ENCODE measurements at regions of chr12 and their contacts with region 1.

Region 1: GRCh38 chr12:10331642-10332239 is 24.1 kb downstream of the KLRD1 start:
- DNase-seq: no peak
- H3K4me3 ChIP-seq: no peak overlapping the region
- H3K27ac ChIP-seq: no peak overlapping the region
- H3K4me1 ChIP-seq: no peaks in the 10 kb centered on the region
- H3K27me3 ChIP-seq: no peaks in the 10 kb centered on the region
- CTCF ChIP-seq: peak; percentile 51 to 72 (median 70)
- POLR2A ChIP-seq: no peak

Region 2: GRCh38 chr12:10310926-10311720 is 20.6 kb before region 1 on chr12:
- intact Hi-C with region 1: no loop called
- DNase-seq: no peak
- H3K4me3 ChIP-seq: no peak overlapping the region
- H3K27ac ChIP-seq: no peak overlapping the region
- H3K4me1 ChIP-seq: no peaks in the 10 kb centered on the region
- H3K27me3 ChIP-seq: no peaks in the 10 kb centered on the region
- CTCF ChIP-seq: no peak
- POLR2A ChIP-seq: no peak

Region 3: DNA sequence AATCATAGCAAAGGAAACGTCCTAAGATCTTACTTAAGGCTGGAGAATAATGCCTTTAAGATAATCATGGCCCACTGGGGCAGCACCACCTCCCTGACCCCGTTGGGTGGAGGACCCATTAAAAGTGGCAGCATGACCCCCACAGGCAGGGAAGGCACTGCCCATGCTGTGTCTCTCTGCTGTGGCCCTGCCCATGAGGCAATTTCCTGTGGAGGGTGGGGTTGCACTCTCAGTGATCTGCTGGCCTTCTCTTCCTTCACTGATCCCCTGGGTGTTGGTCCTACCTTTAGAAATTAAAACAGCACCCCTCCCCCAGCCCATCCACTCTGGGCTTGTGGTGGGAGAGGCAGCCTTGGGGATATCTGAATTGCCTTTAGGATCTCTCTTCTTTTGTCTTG is 40.8 kb after region 1 on chr12:
- intact Hi-C with region 1: no loop called
- DNase-seq: no peak
- H3K4me3 ChIP-seq: no peak overlapping the region
- H3K27ac ChIP-seq: no peak overlapping the region
- H3K4me1 ChIP-seq: no peaks in the 10 kb centered on the region
- H3K27me3 ChIP-seq: no peaks in the 10 kb centered on the region
- CTCF ChIP-seq: no peak
- POLR2A ChIP-seq: no peak

Region 4: DNA sequence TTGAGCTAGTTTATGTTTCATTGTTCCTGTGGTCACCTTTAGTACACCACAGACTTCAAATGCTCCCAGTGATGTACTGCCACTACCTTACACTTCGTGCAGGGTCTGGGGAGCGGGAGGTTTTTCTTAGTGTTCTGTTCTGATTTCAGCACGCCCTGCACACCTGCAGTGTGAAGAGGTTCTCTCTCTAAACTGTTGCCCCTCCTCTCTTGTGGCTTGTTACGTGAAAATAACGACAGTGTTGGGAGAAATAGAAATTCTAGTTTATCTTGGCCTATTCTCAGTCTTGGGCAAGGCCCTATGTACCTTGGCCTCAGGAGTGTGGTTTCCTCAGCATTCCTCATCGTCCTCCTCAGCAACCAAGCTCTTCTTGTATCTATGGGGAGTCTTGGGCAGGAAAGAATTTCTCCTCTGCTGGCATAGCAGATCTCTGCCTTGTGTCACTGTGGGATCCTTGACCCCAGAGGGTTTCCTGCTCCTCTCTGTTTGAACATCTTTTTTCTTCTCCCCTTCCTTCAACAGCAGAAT is 222.6 kb after region 1 on chr12:
- intact Hi-C with region 1: loop called (anchors 5 kb)
- DNase-seq: no peak
- H3K4me3 ChIP-seq: no peak overlapping the region
- H3K27ac ChIP-seq: no peak overlapping the region
- H3K4me1 ChIP-seq: no peaks in the 10 kb centered on the region
- H3K27me3 ChIP-seq: peaks cover 0 to 6% of the 10 kb centered on the region in 2 donors
- CTCF ChIP-seq: no peak
- POLR2A ChIP-seq: no peak